A549 (cell line): ENCODE measurements at regions of chr1 and their contacts with region 1.

Region 1: DNA sequence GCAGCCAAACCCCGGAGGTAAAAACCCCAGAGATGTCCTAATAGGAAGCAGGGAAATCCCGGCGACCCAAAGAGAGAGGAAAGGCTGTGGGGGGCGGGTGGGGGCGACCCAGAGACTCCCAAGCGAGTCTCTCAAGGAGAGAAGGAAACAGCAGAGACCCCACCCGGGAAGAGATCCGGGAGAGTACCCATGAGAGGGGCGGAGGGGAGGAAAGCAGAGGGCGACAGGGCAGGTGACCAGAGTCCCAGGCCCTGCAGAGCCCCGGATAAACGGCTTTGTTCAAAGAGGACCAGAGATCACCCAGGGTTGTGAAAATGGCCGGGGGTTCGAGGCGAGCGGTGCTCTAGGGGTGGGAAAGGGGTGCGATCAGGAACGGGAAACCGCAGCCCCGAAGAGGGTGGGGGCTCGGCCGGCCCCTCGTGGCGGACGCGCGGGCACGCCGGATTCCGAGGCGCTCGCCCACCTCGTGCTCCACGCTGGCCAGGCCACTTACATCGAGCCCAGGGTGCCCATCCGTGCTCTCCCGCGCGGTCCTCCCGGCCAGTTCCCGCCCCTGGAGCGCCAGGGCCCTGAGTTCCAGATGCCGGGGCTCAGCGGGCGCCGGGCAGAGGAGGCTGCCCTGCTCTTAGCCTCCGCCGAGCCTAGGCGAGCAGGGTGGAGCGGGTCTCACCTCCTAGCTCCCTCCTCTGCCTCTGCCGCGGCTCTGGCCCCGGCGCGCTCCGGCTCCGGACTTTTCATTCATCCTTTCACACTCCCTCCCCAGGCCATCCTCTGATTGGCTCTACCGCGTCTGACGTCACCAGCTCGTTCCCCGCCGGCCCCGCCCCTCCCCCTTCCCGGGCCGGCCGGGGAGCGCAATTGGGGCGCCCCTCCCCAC is 52.3 kb downstream of the RHBG start:
- DNase-seq: peak; percentile 83 to 98
- ATAC-seq: peak; percentile 94 to 97
- H3K4me3 ChIP-seq: peak overlapping the region; percentile 61
- H3K27ac ChIP-seq: peak overlapping the region; percentile 67 to 83; a peak in 5 of 6 replicates
- H3K4me1 ChIP-seq: peaks cover 12% of the 10 kb centered on the region
- CTCF ChIP-seq: no peak
- EP300 ChIP-seq: no peak
- POLR2A ChIP-seq: peak; percentile 81
- RAD21 ChIP-seq: no peak

Region 2: DNA sequence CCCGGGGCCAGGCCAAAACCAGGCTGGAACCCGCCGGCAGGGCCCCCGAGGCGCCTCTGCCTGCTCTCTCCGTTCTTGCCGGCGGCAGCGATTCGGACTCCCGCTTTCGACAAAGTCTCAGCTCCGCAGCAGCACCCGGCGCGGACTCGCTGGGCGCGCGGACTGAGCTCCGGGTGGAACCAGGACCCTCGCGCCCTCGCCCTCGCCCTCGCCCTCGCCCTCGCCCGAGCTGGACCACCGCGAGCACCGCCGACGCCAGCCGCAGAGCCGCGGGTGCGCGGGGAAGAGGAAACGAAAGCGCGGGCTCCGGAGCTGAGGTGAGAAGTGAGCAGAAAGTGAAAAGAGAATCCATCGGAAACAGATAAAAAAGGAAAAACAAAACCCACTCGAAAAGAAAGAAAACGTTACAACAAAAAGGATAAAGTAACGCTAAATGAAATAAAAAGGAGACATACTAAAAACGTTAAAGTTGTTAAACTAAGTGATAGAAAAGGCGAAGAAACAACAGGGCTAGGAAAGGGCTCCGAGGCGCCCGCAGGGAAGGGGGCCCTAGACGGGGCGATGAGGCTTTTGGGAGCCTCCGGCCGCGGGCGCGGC is 14.3 kb after region 1 on chr1:
- CTCF ChIA-PET with region 1: interaction called, 61 read pairs
- POLR2A ChIA-PET with region 1: no interaction called
- DNase-seq: no peak
- ATAC-seq: no peak
- H3K4me3 ChIP-seq: peak overlapping the region; percentile 25; the same call in 2 of the 3 replicates
- H3K27ac ChIP-seq: peak overlapping the region in 1 of 2 experiments; percentile 26; a peak in 1 of 6 replicates
- H3K4me1 ChIP-seq: no peaks in the 10 kb centered on the region
- CTCF ChIP-seq: no peak
- EP300 ChIP-seq: no peak
- POLR2A ChIP-seq: no peak
- RAD21 ChIP-seq: no peak